ENCODE measurements at regions of chr14 and their contacts with region 1.

Region 1: DNA sequence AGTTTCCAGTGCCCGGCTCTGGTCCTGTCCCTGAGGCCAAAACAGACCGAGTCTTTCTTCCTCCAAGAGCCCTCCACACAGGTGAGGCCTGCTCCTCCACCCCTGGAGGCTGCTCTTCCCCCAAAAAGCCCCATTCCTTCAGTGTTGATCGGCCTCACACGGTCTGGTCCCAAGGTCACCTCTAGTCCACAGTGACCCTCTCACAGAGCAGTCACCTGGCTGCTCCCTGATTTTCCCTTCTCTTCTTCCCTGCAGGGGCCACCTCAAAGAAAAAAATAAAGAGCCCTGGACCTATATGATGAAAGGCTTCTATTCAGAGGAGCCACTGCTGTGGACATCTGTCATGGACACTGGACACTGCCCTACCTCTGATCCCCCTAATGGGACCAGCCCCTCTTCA is 42.5 kb downstream of the TTC7B start:
- DNase-seq: no peak

Region 2: DNA sequence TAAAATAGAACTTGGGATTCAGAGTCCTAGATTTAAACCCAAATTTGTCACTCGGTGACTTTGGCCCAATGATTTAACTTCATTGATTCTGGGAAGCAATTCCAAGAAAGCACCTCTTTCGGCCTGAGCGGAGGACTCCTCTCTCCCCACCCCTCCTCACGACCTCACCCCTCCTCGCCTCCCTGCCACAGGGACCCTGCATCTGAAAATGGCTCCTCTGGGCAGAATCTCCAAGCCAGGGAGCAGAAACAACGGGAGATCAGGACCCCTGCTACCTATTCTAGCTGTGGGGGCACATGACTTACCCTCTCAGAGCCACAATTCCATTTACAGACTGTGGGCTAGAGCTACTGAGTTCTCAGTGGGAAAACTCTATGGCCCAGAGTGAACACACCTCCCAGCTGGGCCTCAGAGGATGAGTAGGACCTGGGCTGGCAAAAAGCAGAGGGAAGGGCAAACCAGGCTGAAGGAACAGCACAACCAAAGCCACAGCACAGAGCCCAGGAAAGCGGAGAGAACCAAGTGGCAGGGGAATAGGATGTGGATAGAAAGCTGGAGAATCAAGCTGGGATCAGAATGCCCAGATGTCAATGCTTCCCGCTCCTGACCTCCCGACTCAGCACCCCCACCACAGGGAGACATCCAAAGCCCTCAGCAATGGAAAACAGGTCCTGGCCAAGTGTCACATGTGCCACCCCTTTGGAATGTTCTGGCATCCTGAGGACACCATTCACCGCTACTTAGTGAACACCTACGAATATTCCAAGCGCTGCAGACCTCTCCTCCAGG is 16.9 kb after region 1 on chr14:
- intact Hi-C with region 1: loop called in 1 of 2 experiments (anchors 1 kb)
- DNase-seq: peak; percentile 28